ENCODE measurements at regions of chr7 and their contacts with region 1.

Region 1: DNA sequence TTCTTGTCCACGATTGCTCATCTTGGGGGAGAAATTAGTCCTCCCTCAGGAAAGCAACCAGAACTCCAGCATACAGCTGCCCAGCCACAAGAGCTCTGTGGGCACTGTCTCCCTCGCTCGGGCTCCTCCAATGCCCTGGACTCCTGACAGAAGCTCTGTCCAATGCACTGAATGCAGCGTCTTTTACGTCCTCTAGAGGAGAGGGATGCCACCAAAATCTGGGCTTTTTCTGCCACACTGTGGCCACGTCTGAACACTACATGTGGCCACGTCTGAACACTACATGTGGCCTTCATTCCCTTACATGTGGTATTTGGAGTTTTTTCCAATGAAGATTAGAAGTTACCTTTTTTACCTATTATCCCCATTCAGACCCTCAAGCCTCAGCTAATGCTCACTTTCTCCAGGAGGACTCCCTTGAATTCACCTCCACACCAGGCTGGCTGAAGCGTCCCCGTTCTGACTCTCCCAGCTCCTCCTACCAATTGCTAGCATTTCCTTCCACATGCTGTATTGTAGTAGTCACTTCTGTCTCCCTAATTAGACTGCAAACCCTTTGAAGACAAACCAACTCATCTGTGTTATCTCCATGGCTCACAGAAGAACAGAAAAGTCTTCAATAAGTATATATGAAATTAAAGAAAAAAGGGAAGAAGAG is 134.3 kb upstream of the PDE1C start:
- DNase-seq: peak; percentile 59

Region 2: DNA sequence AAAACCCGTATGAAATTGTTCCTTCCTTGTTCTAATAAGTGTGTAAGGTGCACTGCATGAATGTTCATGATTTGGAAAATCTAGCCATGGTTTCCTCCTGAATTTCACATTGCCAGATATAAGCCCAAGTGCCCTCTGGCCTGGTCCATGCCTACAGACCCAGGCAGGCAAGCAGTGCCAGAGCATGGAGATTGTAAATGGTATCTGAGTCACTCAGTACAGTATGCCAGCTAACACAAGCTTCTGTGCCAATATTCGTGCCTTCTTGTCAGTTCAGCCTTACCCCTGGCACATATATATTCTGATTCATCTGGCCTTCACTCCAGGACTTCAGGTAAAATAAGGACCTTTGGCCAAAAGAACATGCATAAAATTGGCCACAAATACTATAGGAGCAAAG is 95.8 kb before region 1 on chr7:
- CTCF ChIA-PET with region 1: no interaction called
- POLR2A ChIA-PET with region 1: no interaction called
- DNase-seq: no peak

Region 3: DNA sequence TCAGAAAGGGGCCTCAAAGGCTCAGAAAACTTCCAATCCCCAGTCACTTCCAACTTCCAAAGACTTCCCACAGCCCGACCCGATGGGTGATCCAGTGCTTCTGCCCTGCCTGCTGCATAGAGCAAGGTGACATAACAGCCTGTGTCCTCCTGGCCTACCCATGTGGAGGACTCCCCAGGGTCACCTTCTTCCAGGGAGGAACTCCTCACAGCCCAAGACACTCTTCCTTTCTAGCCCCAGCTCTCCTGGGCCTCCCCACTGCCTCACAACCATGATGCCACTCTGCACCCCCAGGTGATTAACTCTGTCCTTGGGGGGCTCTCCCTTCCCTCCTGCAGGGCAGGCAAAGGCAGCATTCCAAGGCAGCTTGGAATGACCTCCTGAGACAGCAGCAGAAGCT is 24.1 kb after region 1 on chr7:
- CTCF ChIA-PET with region 1: no interaction called
- POLR2A ChIA-PET with region 1: no interaction called
- DNase-seq: no peak

Region 4: DNA sequence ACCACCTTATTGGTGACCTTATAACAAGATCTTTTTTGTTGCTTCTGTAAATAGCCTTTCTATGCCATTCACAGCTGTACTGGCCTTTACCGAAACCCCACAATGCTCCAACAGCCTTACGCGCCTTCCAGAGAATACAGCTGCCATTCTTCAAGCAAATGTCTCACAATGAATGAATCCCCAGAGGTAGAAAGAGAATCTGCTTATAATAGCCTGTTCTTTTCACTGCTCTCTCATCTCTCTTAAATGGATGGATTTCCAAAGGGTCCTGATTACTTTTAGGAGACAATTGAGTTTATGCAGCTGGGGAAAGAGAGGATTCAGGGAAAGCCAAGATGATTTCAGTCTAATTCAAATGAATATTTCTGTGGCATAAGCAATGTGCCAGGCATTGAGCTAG is 48.8 kb after region 1 on chr7:
- CTCF ChIA-PET with region 1: interaction called, 10 read pairs
- POLR2A ChIA-PET with region 1: no interaction called
- DNase-seq: no peak

Region 5: DNA sequence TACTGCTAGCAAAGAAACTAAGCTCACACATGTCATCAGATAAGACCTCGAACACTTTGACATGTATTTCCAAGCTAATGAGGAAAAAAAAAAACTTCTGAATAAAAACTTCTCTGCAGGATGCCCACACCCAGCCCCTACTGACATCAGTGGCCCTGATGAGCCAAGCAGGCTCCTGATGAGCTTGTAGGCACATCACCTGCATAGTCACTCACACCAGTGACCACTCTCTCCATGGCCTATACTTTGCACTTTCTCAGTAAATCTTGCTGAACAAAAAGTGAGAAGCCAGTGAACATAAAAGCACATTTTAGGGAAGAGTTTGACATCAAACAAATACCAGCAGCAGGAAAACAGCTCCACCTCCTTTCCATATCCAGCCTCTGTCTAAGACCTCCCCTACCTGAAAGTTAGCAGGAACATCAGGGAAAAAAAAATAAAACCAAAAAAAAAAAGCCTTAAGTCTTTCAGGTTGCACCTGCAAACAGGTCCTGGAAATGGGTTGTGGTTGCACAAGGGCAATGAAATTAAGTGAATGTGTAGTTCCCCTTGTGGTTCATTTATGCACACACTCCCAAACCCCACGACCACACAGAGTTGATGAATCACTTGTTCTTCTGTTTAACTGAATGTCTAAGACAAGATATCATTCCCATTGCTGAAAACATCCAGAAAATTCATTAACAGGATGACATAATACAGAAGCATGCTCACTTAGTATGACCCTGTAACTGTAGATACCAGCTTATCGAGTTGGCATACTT is 70.9 kb after region 1 on chr7:
- CTCF ChIA-PET with region 1: no interaction called
- POLR2A ChIA-PET with region 1: no interaction called
- DNase-seq: no peak

Region 6: GRCh38 chr7:32479574-32480200 is 275.2 kb after region 1 on chr7:
- CTCF ChIA-PET with region 1: interaction called, 17 read pairs
- POLR2A ChIA-PET with region 1: no interaction called
- DNase-seq: peak; percentile 64